Vagina (tissue), 2 donors: ENCODE measurements at regions of chr6 and their contacts with region 1.

Region 1: GRCh38 chr6:15065261-15065989 is 180.4 kb upstream of the JARID2 start:
- DNase-seq: no peak
- H3K4me3 ChIP-seq: no peak overlapping the region
- H3K27ac ChIP-seq: no peak overlapping the region
- H3K4me1 ChIP-seq: peaks cover 24% of the 10 kb centered on the region
- H3K27me3 ChIP-seq: no peaks in the 10 kb centered on the region
- CTCF ChIP-seq: no peak
- POLR2A ChIP-seq: no peak

Region 2: DNA sequence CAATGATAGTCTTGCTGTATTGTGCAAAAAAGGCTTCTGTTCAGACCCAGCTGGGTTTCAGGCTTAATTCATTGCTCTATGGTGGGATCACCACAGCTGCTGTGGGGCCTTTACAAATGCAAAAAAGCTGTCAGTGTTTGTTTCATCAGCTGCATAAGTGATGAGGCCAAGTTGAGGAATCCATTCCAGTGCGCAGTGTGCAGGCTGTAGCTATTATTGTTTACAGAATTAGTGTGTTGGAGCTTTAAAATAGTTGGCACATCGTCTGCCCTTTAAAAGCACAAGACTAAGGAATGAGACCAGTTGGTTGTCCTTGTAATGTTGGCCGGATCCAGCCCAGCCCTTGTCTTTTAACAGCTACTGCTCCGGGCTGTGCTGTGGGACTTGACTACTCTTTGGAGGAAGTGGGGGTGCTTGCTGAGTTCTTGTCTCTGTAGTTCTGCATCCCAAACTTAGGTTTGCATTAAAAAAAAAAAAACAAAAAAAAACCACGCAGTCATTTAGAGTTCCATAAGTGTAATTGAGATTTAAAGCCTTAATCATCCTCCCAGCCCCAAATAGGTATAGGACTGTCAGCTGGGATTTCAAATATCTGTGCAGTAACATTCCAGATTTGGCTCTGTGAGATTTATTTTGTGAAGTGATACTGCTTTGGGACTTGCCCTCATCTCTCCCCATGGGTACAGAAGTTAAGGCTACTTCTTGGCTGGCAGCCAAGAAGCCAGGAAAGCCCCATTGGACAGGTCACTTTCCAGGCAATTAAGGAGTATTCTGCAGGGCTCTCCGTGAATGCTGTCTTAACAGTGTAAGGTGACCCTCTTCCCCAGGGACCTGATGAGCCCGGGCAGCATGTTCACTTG is 199.7 kb after region 1 on chr6:
- intact Hi-C with region 1: no loop called
- DNase-seq: no peak
- H3K4me3 ChIP-seq: no peak overlapping the region
- H3K27ac ChIP-seq: no peak overlapping the region
- H3K4me1 ChIP-seq: peaks cover 70% of the 10 kb centered on the region
- H3K27me3 ChIP-seq: no peaks in the 10 kb centered on the region
- CTCF ChIP-seq: no peak
- POLR2A ChIP-seq: no peak

Region 3: DNA sequence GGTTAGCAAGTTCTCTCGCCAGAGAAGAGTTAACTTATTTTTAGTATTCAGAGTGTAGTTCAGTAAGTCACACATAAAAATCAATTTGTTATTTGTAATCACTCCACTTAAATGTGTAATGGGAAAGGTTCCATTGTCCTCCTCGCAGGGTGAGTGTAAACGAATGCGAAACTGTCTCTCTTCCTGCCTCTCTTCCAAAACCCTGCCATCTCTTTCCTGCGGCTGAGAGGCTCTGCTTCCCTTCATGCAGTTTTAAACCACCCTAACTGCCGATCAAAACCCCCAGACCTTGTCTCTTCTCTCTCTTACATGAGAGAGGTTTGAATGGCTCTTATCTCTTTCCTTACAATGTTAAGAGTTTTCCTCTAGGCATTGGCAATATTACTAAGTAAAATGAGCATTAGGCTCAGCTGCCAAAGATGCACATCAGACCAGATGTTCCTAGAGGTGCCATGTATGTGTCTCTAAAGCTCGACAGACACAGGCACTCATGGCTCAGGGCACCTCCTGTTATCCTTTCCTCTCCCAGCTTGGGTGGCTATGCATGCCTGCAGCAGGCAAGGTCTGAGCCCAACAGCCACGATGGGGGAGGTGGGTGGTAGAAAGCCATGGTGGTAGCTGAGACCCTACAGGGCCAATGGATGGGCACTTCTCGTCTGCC is 271.6 kb after region 1 on chr6:
- intact Hi-C with region 1: loop called (anchors 5 kb)
- DNase-seq: no peak
- H3K4me3 ChIP-seq: no peak overlapping the region
- H3K27ac ChIP-seq: no peak overlapping the region
- H3K4me1 ChIP-seq: peaks cover 25% of the 10 kb centered on the region
- H3K27me3 ChIP-seq: no peaks in the 10 kb centered on the region
- CTCF ChIP-seq: no peak
- POLR2A ChIP-seq: no peak